ENCODE measurements at regions of chr5 and their contacts with region 1.

Region 1: GRCh38 chr5:154857530-154858296 is 714 bp upstream of the CNOT8 start:
- DNase-seq: peak; percentile 97
- ATAC-seq: peak; percentile 95
- H3K4me3 ChIP-seq: peak overlapping the region; percentile 46 to 69
- H3K27ac ChIP-seq: peak overlapping the region; percentile 8 to 94
- H3K4me1 ChIP-seq: peaks cover 2 to 4% of the 10 kb centered on the region in 2 donors
- H3K27me3 ChIP-seq: no peaks in the 10 kb centered on the region

Region 2: GRCh38 chr5:154683101-154683880 is 174.4 kb before region 1 on chr5:
- intact Hi-C with region 1: loop called in 1 of 2 experiments (anchors 2 kb)
- DNase-seq: no peak
- ATAC-seq: no peak
- H3K4me3 ChIP-seq: peak overlapping the region in 1 of 2 donors; percentile 36
- H3K27ac ChIP-seq: peak overlapping the region in 1 of 2 donors; percentile 34
- H3K4me1 ChIP-seq: no peaks in the 10 kb centered on the region
- H3K27me3 ChIP-seq: no peaks in the 10 kb centered on the region

Region 3: DNA sequence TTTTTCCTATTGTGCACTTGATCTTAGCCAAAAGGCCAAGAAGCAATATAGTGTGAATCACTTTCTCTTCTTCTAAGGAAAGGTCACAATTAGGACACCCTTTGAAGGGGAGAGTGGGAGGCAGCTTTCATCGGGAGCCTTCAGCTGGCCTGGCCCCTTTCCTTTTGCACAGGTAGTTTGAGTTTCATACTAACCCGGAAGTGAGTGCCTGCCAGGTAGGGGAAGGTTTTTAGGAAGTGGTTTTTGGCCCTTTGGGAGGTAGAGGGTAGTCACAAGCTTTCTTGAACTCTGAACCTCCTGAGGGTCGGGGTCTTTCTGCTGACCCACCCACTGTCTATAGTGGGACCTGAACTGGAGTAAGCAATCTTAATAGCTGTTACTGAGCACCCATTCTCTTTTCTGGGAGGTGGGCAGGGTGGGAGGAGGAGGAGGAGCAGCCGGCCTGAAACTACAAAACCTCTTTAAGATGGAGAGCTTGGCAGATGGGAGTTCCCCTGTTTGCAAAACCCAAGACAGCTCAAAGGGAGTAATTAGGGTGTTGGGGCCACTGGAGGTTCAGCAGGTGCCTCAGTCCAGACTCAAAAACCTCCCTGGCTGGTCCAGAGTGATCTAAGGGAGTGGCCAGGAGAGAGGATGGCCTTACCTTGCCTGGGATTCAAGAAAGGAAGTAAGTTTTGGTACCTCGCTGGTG is 96.5 kb before region 1 on chr5:
- intact Hi-C with region 1: loop called in 1 of 2 experiments (anchors 5 kb)
- DNase-seq: no peak
- ATAC-seq: no peak
- H3K4me3 ChIP-seq: no peak overlapping the region
- H3K27ac ChIP-seq: no peak overlapping the region
- H3K4me1 ChIP-seq: peaks cover 3 to 5% of the 10 kb centered on the region in 2 donors
- H3K27me3 ChIP-seq: no peaks in the 10 kb centered on the region

Region 4: DNA sequence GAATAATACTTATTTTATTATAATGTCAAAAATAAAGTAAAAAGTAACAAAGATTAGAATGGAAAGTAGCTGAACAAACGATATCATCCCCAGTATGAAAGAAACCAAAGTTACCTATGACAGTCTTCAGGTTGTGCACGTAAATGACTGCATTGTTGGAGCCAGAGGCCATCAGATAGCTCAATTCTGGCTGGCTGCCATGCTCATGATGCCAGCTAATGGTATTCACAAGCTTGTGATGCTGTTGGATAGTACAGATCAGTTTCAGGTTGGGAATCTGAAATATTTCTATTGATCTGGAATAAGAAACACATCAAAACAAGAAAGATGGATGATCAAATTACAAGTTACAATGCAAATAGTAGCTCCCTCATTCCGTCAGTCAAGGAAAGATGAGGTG is 59.2 kb after region 1 on chr5:
- intact Hi-C with region 1: no loop called
- DNase-seq: no peak
- ATAC-seq: no peak
- H3K4me3 ChIP-seq: no peak overlapping the region
- H3K27ac ChIP-seq: no peak overlapping the region
- H3K4me1 ChIP-seq: no peaks in the 10 kb centered on the region
- H3K27me3 ChIP-seq: no peaks in the 10 kb centered on the region